ENCODE measurements at regions of chr6 and their contacts with region 1.

Region 1: GRCh38 chr6:28838634-28839442 is 84.9 kb downstream of the TRIM27 start:
- DNase-seq: peak; percentile 66 to 89 (median 81)
- ATAC-seq: peak; percentile 79
- H3K4me3 ChIP-seq: peak overlapping the region; percentile 83
- H3K4me3 Mint-ChIP-seq: peak overlapping the region; percentile 86 to 99 (median 96)
- H3K27ac ChIP-seq: peak overlapping the region; percentile 60
- H3K27ac Mint-ChIP-seq: peak overlapping the region; percentile 83 to 98 (median 93)
- H3K4me1 ChIP-seq: peaks cover 8 to 11% of the 10 kb centered on the region in 2 donors
- H3K4me1 Mint-ChIP-seq: peaks cover 13 to 31% (median 20%) of the 10 kb centered on the region in 7 donors
- H3K27me3 ChIP-seq: no peaks in the 10 kb centered on the region
- H3K27me3 Mint-ChIP-seq: peaks cover 17 to 66% (median 25%) of the 10 kb centered on the region in 5 donors

Region 2: DNA sequence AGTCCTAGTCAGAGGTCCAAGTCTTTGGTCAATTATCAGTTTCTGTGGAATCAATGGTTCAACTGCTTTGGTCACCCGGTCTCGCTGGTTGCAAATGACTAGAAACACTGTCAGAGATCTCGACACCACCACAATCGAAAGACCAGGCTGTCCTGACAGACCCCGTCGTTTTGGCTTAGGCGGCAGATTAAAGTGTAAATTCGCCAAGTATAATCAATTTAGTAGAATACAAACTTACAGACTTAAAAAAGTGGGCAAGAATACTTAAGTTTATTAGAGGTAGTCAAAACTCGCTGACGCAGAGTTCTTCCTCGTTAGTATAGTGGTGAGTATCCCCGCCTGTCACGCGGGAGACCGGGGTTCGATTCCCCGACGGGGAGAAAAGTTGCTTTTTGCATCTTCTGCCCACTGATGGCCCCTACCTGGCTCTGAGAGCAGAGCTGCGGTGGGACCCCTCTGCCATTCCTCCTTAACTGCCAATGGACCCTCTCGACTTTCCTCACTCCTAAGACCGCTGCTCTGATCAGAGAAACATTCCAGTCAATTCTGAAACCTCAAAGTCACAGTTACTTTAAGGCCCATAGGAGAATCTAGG is 1335.3 kb before region 1 on chr6:
- CTCF ChIA-PET with region 1: no interaction called
- POLR2A ChIA-PET with region 1: no interaction called
- intact Hi-C with region 1: loop called in 1 of 2 experiments (anchors 1 kb)
- DNase-seq: peak; percentile 73 to 86 (median 80)
- ATAC-seq: peak; percentile 75
- H3K4me3 ChIP-seq: peak overlapping the region; percentile 61
- H3K4me3 Mint-ChIP-seq: peak overlapping the region; percentile 85 to 99 (median 91)
- H3K27ac ChIP-seq: peak overlapping the region; percentile 57
- H3K27ac Mint-ChIP-seq: peak overlapping the region; percentile 82 to 97 (median 91)
- H3K4me1 ChIP-seq: peaks cover 6% of the 10 kb centered on the region in 2 donors
- H3K4me1 Mint-ChIP-seq: peaks cover 15 to 41% (median 36%) of the 10 kb centered on the region in 7 donors
- H3K27me3 ChIP-seq: no peaks in the 10 kb centered on the region
- H3K27me3 Mint-ChIP-seq: peaks cover 5 to 62% (median 11%) of the 10 kb centered on the region in 5 donors

Region 3: GRCh38 chr6:28496099-28496779 is 342.6 kb before region 1 on chr6:
- CTCF ChIA-PET with region 1: no interaction called
- POLR2A ChIA-PET with region 1: no interaction called
- intact Hi-C with region 1: loop called in 1 of 2 experiments (anchors 5 kb)
- DNase-seq: peak in 2 of 9 donors; percentile 17 to 25
- ATAC-seq: no peak
- H3K4me3 ChIP-seq: no peak overlapping the region
- H3K4me3 Mint-ChIP-seq: no peak overlapping the region
- H3K27ac ChIP-seq: no peak overlapping the region
- H3K27ac Mint-ChIP-seq: no peak overlapping the region
- H3K4me1 ChIP-seq: no peaks in the 10 kb centered on the region
- H3K4me1 Mint-ChIP-seq: peaks cover 0 to 8% (median 0%) of the 10 kb centered on the region in 7 donors
- H3K27me3 ChIP-seq: no peaks in the 10 kb centered on the region
- H3K27me3 Mint-ChIP-seq: peaks cover 9 to 52% (median 43%) of the 10 kb centered on the region in 5 donors

Region 4: GRCh38 chr6:28863604-28864320 is 24.9 kb after region 1 on chr6:
- CTCF ChIA-PET with region 1: interaction called, 32 read pairs
- POLR2A ChIA-PET with region 1: interaction called, 26 read pairs
- intact Hi-C with region 1: loop called (anchors 1 kb)
- DNase-seq: peak; percentile 60 to 93 (median 89)
- ATAC-seq: peak; percentile 64
- H3K4me3 ChIP-seq: peak overlapping the region; percentile 95
- H3K4me3 Mint-ChIP-seq: peak overlapping the region; percentile 90 to 98 (median 92)
- H3K27ac ChIP-seq: peak overlapping the region; percentile 75
- H3K27ac Mint-ChIP-seq: peak overlapping the region; percentile 89 to 100 (median 95)
- H3K4me1 ChIP-seq: peaks cover 11 to 18% of the 10 kb centered on the region in 2 donors
- H3K4me1 Mint-ChIP-seq: peaks cover 15 to 69% (median 53%) of the 10 kb centered on the region in 7 donors
- H3K27me3 ChIP-seq: no peaks in the 10 kb centered on the region
- H3K27me3 Mint-ChIP-seq: peaks cover 0 to 30% (median 4%) of the 10 kb centered on the region in 5 donors

Region 5: DNA sequence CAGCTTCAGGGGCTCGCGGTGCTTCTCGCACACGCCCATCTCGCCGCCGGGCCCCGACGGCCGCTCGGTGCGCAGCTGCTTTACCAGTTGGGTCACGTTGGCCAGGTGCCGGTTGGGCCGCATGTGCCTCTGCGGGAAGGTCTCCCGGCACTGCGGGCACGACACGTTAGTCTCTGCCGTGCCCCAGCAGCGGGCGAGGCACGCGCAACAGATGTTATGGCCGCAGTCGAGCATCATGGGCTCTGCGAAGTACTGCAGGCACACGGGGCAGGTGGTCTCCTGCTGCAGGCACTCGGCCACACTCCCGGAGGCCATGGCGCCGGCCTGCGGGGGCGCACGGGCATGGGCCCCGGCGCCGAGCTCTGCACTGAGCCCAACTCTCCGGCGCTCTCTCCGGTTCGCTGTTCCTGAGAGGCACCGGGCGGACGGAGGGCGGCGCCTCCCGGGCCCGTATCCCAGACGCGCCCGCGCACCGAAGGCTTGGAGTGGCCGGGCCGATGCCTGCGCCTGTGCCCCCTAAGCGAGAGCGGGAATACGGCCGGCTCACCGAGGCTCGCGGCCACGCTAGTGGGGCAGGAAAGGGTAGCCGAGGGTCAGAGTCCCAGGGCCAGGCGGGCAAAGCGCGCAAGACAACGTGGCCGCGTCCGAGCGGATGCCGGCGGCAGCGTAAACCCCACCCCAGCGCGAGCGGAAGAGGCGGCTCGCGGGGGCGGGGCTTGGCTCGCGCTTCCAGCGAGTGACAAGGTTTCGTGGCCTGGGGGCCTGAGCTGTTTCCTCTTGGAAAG is 84.7 kb after region 1 on chr6 and contains the start of gene TRIM27:
- CTCF ChIA-PET with region 1: interaction called, 4 read pairs
- POLR2A ChIA-PET with region 1: interaction called, 29 read pairs
- intact Hi-C with region 1: loop called (anchors 1 kb)
- DNase-seq: peak; percentile 67 to 87 (median 80)
- ATAC-seq: peak; percentile 89
- H3K4me3 ChIP-seq: peak within 1 kb of the TSS; percentile 87
- H3K4me3 Mint-ChIP-seq: peak within 1 kb of the TSS; percentile 87 to 99 (median 95)
- H3K27ac ChIP-seq: peak within 1 kb of the TSS; percentile 86
- H3K27ac Mint-ChIP-seq: peak within 1 kb of the TSS; percentile 86 to 96 (median 92)
- H3K4me1 ChIP-seq: peaks cover 20 to 34% of the 10 kb centered on the region in 2 donors
- H3K4me1 Mint-ChIP-seq: peaks cover 28 to 52% (median 41%) of the 10 kb centered on the region in 7 donors
- H3K27me3 ChIP-seq: no peaks in the 10 kb centered on the region
- H3K27me3 Mint-ChIP-seq: no peaks in the 10 kb centered on the region
- total RNA-seq, gene TRIM27: 22.9 to 93.9 (median 67.5) TPM

Region 6: DNA sequence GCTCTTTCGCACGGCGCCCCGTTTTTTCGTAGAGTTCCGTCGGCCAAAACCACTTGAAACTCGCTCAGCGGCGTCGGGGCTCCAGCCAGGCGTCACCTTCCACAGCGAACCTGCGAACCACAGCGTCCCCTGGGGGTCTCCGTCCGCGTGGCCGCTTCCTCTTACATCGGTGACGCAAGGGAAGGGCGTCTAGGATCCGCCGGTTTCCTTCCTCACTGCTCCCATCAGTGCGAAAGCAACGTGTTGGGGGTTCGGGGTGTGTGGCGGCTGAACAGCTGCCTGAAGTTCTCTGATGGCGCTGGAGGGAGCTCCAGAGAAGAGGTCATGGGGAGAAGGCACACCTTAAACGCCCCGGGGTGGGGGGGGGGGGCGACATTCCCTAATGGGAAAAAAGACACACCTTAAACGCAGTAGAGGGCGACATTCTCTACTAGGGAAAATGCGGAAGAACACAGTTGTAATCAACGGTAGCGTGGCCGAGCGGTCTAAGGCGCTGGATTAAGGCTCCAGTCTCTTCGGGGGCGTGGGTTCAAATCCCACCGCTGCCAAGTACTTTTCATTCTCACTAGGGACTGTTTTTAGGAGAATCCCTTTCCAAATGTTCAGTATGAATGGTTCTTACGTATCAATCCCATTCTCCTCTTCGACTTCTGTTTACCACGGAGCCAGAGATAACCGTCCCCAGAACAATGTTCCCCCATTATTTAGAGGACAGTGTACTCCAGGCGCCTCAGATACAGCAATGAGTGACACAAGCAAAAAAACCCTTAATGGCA is 149.9 kb after region 1 on chr6:
- CTCF ChIA-PET with region 1: interaction called, 23 read pairs
- POLR2A ChIA-PET with region 1: interaction called, 8 read pairs
- intact Hi-C with region 1: loop called in 1 of 2 experiments (anchors 1 kb)
- DNase-seq: peak; percentile 57 to 77 (median 71)
- ATAC-seq: peak; percentile 93
- H3K4me3 ChIP-seq: peak overlapping the region; percentile 53
- H3K4me3 Mint-ChIP-seq: peak overlapping the region; percentile 79 to 88 (median 84)
- H3K27ac ChIP-seq: no peak overlapping the region
- H3K27ac Mint-ChIP-seq: peak overlapping the region in 7 of 9 donors; percentile 28 to 82 (median 32)
- H3K4me1 ChIP-seq: peaks cover 0 to 5% of the 10 kb centered on the region in 2 donors
- H3K4me1 Mint-ChIP-seq: peaks cover 7 to 38% (median 32%) of the 10 kb centered on the region in 7 donors
- H3K27me3 ChIP-seq: no peaks in the 10 kb centered on the region
- H3K27me3 Mint-ChIP-seq: peaks cover 0 to 53% (median 15%) of the 10 kb centered on the region in 5 donors

Region 7: DNA sequence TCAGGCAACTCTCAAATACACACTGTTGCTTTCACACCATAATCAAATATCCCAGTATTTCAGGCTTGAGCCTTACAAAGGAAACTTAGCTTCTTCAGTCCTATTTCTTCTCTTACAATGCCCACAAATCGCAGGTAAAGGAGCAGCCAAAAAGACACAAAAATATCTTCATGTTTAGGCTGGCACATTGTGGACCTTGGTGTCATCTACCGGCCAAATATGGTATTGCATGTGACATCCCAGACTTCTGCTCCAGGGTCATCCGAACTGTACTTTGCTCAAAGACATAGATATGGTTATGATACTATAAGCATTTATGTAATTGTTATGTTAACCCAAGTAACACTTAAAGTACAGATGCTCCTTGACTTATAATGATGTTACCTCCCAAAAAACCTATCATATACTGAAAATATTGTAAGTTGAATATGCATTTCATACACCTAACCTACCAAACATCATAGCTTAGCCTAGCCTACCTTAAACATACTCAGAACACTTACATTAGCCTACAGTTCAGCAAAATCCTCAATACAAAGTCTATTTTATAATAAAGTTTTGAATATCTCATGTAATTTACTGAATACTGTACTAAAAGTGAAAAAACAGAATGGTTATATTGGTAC is 750.7 kb after region 1 on chr6:
- CTCF ChIA-PET with region 1: interaction called, 3 read pairs
- POLR2A ChIA-PET with region 1: no interaction called
- intact Hi-C with region 1: loop called in 1 of 2 experiments (anchors 10 kb)
- DNase-seq: peak; percentile 14 to 62 (median 48)
- ATAC-seq: peak; percentile 80
- H3K4me3 ChIP-seq: no peak overlapping the region
- H3K4me3 Mint-ChIP-seq: no peak overlapping the region
- H3K27ac ChIP-seq: no peak overlapping the region
- H3K27ac Mint-ChIP-seq: no peak overlapping the region
- H3K4me1 ChIP-seq: no peaks in the 10 kb centered on the region
- H3K4me1 Mint-ChIP-seq: peaks cover 0 to 6% (median 0%) of the 10 kb centered on the region in 7 donors
- H3K27me3 ChIP-seq: peaks cover 0 to 5% of the 10 kb centered on the region in 2 donors
- H3K27me3 Mint-ChIP-seq: peaks cover 11 to 38% (median 28%) of the 10 kb centered on the region in 5 donors